Activated CD4-positive, alpha-beta memory T cell treated with anti-CD3 and anti-CD28 coated beads for 36 hours (primary cell): ENCODE measurements at regions of chr1 and their contacts with region 1.

Region 1: GRCh38 chr1:51569284-51570062 is 47.4 kb upstream of the OSBPL9 start:
- DNase-seq: peak; percentile 57
- H3K4me3 Mint-ChIP-seq: no peak overlapping the region
- H3K27ac Mint-ChIP-seq: peak overlapping the region; percentile 82
- H3K4me1 Mint-ChIP-seq: peaks cover 26% of the 10 kb centered on the region
- H3K27me3 Mint-ChIP-seq: no peaks in the 10 kb centered on the region

Region 2: DNA sequence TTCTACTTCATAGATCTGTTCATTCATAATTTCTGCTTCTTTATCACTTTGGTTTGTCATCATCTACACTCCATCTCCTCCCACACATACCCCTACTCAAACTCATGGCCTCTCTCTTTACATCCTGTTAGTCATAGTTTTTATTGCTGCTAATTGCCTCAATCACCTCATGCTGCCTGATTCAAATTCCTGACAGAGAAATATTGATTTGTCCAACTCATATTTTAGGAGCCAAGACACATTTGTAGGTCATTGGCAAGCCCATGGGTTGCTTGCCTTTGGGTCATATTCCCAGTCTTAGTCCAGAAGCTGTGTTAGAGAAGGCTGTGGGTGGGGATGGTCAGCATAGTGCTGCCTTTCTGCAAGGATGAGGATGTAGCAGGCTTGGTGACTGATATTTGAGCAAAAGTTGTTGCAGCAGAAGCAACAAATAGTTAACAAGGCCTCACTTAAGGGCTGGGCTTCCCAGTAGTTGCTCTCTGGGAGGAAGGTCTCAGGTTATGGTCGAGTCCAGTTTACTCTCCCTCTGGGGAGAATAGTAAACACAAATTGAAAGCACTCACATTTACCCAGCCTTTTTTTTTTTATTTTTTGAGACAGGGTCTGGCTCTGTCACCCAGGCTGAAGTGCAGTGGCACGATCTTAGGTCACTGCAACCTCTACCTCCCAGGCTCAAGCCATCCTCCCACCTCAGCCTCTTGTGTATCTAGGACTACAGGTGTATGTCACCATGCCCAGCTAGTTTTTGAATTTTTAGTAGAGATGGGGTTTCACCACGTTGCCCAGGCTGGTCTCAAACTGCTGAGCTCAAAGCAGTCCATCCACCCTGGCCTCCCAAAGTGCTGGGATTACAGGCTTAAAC is 27.9 kb before region 1 on chr1:
- CTCF ChIA-PET with region 1: no interaction called
- POLR2A ChIA-PET with region 1: no interaction called
- intact Hi-C with region 1: loop called (anchors 2 kb)
- DNase-seq: no peak
- H3K4me3 Mint-ChIP-seq: no peak overlapping the region
- H3K27ac Mint-ChIP-seq: peak overlapping the region; percentile 9
- H3K4me1 Mint-ChIP-seq: peaks cover 28% of the 10 kb centered on the region
- H3K27me3 Mint-ChIP-seq: no peaks in the 10 kb centered on the region

Region 3: DNA sequence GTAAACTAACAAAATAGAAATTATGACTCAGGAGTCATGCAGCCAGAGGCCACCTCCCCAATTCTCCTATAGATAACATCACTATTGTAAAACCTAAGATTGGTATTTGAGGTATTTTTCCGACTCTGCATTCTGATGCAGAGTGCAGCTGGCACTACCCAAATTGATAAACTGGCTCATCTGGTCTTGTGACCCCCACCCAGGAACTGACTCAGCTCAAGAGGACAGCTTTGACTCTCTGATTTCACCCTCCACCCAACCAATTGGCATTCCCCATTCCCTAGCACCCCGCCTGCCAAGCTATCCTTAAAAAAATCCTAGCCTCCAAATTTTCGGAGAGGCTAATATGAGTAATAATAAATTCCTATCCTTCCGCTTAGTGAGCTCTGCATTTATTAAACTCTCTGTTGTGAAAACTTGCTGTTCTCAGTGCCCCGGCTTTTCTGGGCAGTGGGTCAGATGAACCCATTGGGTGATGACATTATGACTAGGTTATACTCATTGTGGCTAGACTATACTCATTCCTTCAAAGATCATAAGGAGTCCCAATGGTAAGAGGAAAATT is 11.0 kb before region 1 on chr1:
- CTCF ChIA-PET with region 1: no interaction called
- POLR2A ChIA-PET with region 1: no interaction called
- intact Hi-C with region 1: loop called (anchors 1 kb)
- DNase-seq: peak; percentile 60
- H3K4me3 Mint-ChIP-seq: no peak overlapping the region
- H3K27ac Mint-ChIP-seq: peak overlapping the region; percentile 35
- H3K4me1 Mint-ChIP-seq: peaks cover 11% of the 10 kb centered on the region
- H3K27me3 Mint-ChIP-seq: no peaks in the 10 kb centered on the region

Region 4: GRCh38 chr1:51616901-51617708 is 47.6 kb after region 1 on chr1 and contains the start of gene OSBPL9:
- CTCF ChIA-PET with region 1: no interaction called
- POLR2A ChIA-PET with region 1: no interaction called
- intact Hi-C with region 1: loop called (anchors 1 kb)
- DNase-seq: peak; percentile 94
- H3K4me3 Mint-ChIP-seq: peak within 1 kb of the TSS; percentile 99
- H3K27ac Mint-ChIP-seq: peak within 1 kb of the TSS; percentile 80
- H3K4me1 Mint-ChIP-seq: peaks cover 32% of the 10 kb centered on the region
- H3K27me3 Mint-ChIP-seq: no peaks in the 10 kb centered on the region
- total RNA-seq, gene OSBPL9: 46.1 to 48.6 TPM

Region 5: GRCh38 chr1:51627678-51628077 is 58.2 kb after region 1 on chr1:
- CTCF ChIA-PET with region 1: no interaction called
- POLR2A ChIA-PET with region 1: no interaction called
- intact Hi-C with region 1: no loop called
- DNase-seq: no peak
- H3K4me3 Mint-ChIP-seq: no peak overlapping the region
- H3K27ac Mint-ChIP-seq: no peak overlapping the region
- H3K4me1 Mint-ChIP-seq: peaks cover 39% of the 10 kb centered on the region
- H3K27me3 Mint-ChIP-seq: no peaks in the 10 kb centered on the region